Activated CD4-positive, alpha-beta T cell treated with anti-CD3 and anti-CD28 coated beads for 36 hours (primary cell): ENCODE measurements at regions of chr19 and their contacts with region 1.

Region 1: GRCh38 chr19:7925171-7925851 is 624 bp downstream of the CTXN1 start:
- DNase-seq: peak; percentile 90
- ATAC-seq: peak; percentile 50
- H3K4me3 Mint-ChIP-seq: peak overlapping the region; percentile 67
- H3K27ac Mint-ChIP-seq: no peak overlapping the region
- H3K4me1 Mint-ChIP-seq: peaks cover 28% of the 10 kb centered on the region
- H3K27me3 Mint-ChIP-seq: peaks cover 1% of the 10 kb centered on the region

Region 2: GRCh38 chr19:7852851-7853769 is 72.2 kb before region 1 on chr19:
- CTCF ChIA-PET with region 1: interaction called, 3 read pairs
- POLR2A ChIA-PET with region 1: no interaction called
- intact Hi-C with region 1: loop called (anchors 1 to 5 kb)
- DNase-seq: peak; percentile 85
- ATAC-seq: peak; percentile 89
- H3K4me3 Mint-ChIP-seq: no peak overlapping the region
- H3K27ac Mint-ChIP-seq: no peak overlapping the region
- H3K4me1 Mint-ChIP-seq: peaks cover 3% of the 10 kb centered on the region
- H3K27me3 Mint-ChIP-seq: no peaks in the 10 kb centered on the region

Region 3: GRCh38 chr19:7953060-7953459 is 27.7 kb after region 1 on chr19:
- CTCF ChIA-PET with region 1: no interaction called
- POLR2A ChIA-PET with region 1: no interaction called
- intact Hi-C with region 1: no loop called
- DNase-seq: no peak
- ATAC-seq: no peak
- H3K4me3 Mint-ChIP-seq: no peak overlapping the region
- H3K27ac Mint-ChIP-seq: no peak overlapping the region
- H3K4me1 Mint-ChIP-seq: no peaks in the 10 kb centered on the region
- H3K27me3 Mint-ChIP-seq: no peaks in the 10 kb centered on the region